ENCODE measurements at regions of chr15 and their contacts with region 1.

Region 1: GRCh38 chr15:49145651-49146609 is 9.5 kb downstream of the COPS2 start:
- DNase-seq: peak in 6 of 9 donors; percentile 18 to 49 (median 28)
- ATAC-seq: peak; percentile 76
- H3K4me3 ChIP-seq: no peak overlapping the region
- H3K4me3 Mint-ChIP-seq: peak overlapping the region in 1 of 10 donors; percentile 44
- H3K27ac ChIP-seq: no peak overlapping the region
- H3K27ac Mint-ChIP-seq: peak overlapping the region in 4 of 9 donors; percentile 1 to 63 (median 42)
- H3K4me1 ChIP-seq: peaks cover 8 to 14% of the 10 kb centered on the region in 2 donors
- H3K4me1 Mint-ChIP-seq: peaks cover 22 to 74% (median 50%) of the 10 kb centered on the region in 7 donors
- H3K27me3 ChIP-seq: no peaks in the 10 kb centered on the region
- H3K27me3 Mint-ChIP-seq: no peaks in the 10 kb centered on the region

Region 2: GRCh38 chr15:48358229-48358641 is 787.7 kb before region 1 on chr15:
- CTCF ChIA-PET with region 1: no interaction called
- POLR2A ChIA-PET with region 1: no interaction called
- intact Hi-C with region 1: loop called in 1 of 2 experiments (anchors 5 kb)
- DNase-seq: no peak
- ATAC-seq: no peak
- H3K4me3 ChIP-seq: no peak overlapping the region
- H3K4me3 Mint-ChIP-seq: no peak overlapping the region
- H3K27ac ChIP-seq: no peak overlapping the region
- H3K27ac Mint-ChIP-seq: no peak overlapping the region
- H3K4me1 ChIP-seq: no peaks in the 10 kb centered on the region
- H3K4me1 Mint-ChIP-seq: peaks cover 0 to 11% (median 8%) of the 10 kb centered on the region in 7 donors
- H3K27me3 ChIP-seq: no peaks in the 10 kb centered on the region
- H3K27me3 Mint-ChIP-seq: no peaks in the 10 kb centered on the region

Region 3: DNA sequence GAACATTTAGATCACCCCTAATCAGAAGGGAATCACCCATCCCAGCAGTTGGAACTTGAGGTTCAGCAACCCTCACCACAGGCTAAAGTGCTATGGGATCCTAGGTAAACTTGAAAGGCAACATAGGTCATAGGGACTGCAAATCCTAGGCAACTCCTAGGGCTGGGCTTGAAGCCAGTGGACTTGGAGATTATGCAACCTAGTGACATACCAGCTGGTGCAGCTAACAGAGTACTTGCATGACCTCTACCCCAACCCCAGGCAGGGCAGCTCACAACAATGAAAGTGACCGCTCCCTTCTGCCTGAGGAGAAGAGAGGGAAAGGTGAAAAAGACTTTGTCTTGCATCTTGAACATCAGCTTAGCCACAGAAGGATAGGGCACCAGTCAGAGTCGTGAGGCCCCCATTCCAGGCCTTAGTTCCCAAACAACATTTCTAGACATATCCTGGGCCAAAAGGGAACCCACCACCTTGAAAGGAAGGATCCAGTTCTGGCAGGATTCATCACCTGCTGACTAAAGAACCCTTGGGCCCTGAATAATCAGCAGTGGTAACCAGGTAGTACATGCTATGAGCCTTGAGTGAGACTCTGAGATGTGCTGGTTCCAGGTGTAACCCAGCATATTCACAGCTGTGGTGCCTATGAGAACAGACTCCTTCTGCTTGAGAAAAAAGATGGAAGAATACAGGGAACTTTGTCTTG is 462.8 kb before region 1 on chr15:
- CTCF ChIA-PET with region 1: no interaction called
- POLR2A ChIA-PET with region 1: no interaction called
- intact Hi-C with region 1: no loop called
- DNase-seq: no peak
- ATAC-seq: no peak
- H3K4me3 ChIP-seq: no peak overlapping the region
- H3K4me3 Mint-ChIP-seq: no peak overlapping the region
- H3K27ac ChIP-seq: no peak overlapping the region
- H3K27ac Mint-ChIP-seq: no peak overlapping the region
- H3K4me1 ChIP-seq: no peaks in the 10 kb centered on the region
- H3K4me1 Mint-ChIP-seq: no peaks in the 10 kb centered on the region
- H3K27me3 ChIP-seq: no peaks in the 10 kb centered on the region
- H3K27me3 Mint-ChIP-seq: peaks cover 0 to 8% (median 0%) of the 10 kb centered on the region in 5 donors

Region 4: GRCh38 chr15:48975472-48976419 is 170.2 kb before region 1 on chr15:
- CTCF ChIA-PET with region 1: interaction called, 14 read pairs
- POLR2A ChIA-PET with region 1: no interaction called
- intact Hi-C with region 1: no loop called
- DNase-seq: peak; percentile 48 to 87 (median 71)
- ATAC-seq: peak; percentile 98
- H3K4me3 ChIP-seq: peak overlapping the region; percentile 58
- H3K4me3 Mint-ChIP-seq: peak overlapping the region; percentile 29 to 75 (median 63)
- H3K27ac ChIP-seq: no peak overlapping the region
- H3K27ac Mint-ChIP-seq: no peak overlapping the region
- H3K4me1 ChIP-seq: peaks cover 3 to 4% of the 10 kb centered on the region in 2 donors
- H3K4me1 Mint-ChIP-seq: peaks cover 0 to 10% (median 0%) of the 10 kb centered on the region in 7 donors
- H3K27me3 ChIP-seq: no peaks in the 10 kb centered on the region
- H3K27me3 Mint-ChIP-seq: peaks cover 4 to 38% (median 19%) of the 10 kb centered on the region in 5 donors

Region 5: DNA sequence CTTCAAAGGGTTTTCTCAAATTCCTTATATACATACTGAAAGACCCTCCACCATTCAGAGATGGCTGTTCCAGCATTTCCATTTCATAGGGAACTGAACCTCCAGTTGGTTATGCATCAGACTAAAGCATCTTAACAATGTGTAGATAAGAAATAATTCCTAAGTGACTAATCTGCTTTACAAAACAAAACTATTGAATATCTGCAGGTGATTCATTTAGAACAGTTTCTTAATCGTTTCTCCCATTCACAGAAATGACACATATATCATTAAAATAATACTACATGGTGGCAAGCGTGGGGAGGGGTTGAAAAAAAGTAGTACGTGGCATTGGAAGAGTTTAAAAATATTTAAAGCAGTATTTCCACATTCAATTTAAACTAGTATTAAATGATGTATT is 10.0 kb before region 1 on chr15:
- CTCF ChIA-PET with region 1: interaction called, 5 read pairs
- POLR2A ChIA-PET with region 1: interaction called, 3 read pairs
- intact Hi-C with region 1: loop called in 1 of 2 experiments (anchors 2 kb)
- DNase-seq: no peak
- ATAC-seq: no peak
- H3K4me3 ChIP-seq: no peak overlapping the region
- H3K4me3 Mint-ChIP-seq: no peak overlapping the region
- H3K27ac ChIP-seq: no peak overlapping the region
- H3K27ac Mint-ChIP-seq: no peak overlapping the region
- H3K4me1 ChIP-seq: no peaks in the 10 kb centered on the region
- H3K4me1 Mint-ChIP-seq: peaks cover 0 to 22% (median 0%) of the 10 kb centered on the region in 7 donors
- H3K27me3 ChIP-seq: no peaks in the 10 kb centered on the region
- H3K27me3 Mint-ChIP-seq: no peaks in the 10 kb centered on the region

Measured in naive thymus-derived CD4-positive, alpha-beta T cell (primary cell).